Pancreas (tissue), 10 donors: ENCODE measurements at regions of chr21 and their contacts with region 1.

Region 1: DNA sequence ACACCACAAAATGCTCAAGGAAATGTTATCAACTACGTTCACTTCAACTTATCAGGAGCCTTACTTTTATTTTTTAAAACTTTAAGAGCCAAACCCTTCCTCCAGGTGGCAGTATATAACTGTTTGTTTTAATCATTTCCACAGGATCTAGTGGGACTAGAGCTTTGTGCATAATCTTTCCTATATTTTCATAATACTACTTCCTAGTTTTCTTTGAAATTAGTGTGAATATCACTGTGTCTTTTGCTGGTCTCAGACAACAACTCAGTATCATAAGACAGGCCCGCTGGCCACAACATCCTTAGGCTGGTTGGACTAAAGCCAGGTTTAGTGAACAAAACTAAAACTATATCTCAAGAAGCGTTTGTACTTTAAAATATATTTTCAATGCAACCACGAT is 145.5 kb downstream of the TIAM1 start:
- DNase-seq: no peak
- ATAC-seq: peak in 3 of 4 donors; percentile 75 to 82 (median 79)
- H3K4me3 ChIP-seq: no peak overlapping the region
- H3K27ac ChIP-seq: no peak overlapping the region
- H3K4me1 ChIP-seq: peaks cover 0 to 5% (median 0%) of the 10 kb centered on the region in 3 donors
- H3K27me3 ChIP-seq: peaks cover 0 to 10% (median 2%) of the 10 kb centered on the region in 4 donors
- CTCF ChIP-seq: peak in 3 of 4 donors; percentile 39 to 63 (median 54)

Region 2: DNA sequence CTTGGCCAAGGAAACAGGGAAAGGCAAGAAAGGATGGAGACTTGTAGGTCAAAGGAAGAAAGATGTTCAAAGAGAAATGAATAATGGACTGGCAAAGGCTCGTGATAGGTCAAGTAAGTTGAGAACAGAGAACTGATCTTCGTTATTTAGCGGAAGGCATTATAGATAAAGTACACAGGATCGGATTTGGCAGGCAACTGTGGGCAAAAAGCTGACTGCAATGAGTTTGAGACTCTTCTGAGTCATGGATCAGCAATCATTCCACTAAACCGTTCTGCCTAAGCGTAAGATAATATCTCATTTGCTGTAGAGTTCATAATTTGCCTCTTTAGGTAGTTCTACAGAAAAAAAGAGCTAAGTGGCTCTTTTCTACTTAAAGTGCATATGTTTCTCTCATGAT is 514.1 kb before region 1 on chr21:
- intact Hi-C with region 1: no loop called
- DNase-seq: no peak
- ATAC-seq: no peak
- H3K4me3 ChIP-seq: no peak overlapping the region
- H3K27ac ChIP-seq: no peak overlapping the region
- H3K4me1 ChIP-seq: no peaks in the 10 kb centered on the region
- H3K27me3 ChIP-seq: no peaks in the 10 kb centered on the region
- CTCF ChIP-seq: no peak

Region 3: DNA sequence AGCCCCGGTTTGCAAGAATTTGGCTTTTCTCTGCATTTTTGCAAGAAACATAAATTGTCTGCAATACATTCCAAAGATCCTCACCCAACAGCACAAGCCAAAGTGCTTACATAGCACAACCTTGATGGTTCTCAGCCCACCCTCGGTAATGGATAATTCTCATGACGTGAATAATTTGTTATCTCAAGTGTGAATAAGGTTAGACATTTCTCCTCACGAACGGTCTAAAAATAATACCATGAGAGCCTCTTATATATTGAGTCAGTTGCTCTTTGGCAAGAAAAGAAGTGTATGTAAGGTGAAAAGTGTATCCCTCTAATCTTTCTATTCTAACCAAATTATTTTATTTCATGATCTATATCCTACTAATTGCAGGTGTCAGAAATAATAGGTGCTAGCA is 193.6 kb before region 1 on chr21:
- intact Hi-C with region 1: no loop called
- DNase-seq: no peak
- ATAC-seq: no peak
- H3K4me3 ChIP-seq: no peak overlapping the region
- H3K27ac ChIP-seq: no peak overlapping the region
- H3K4me1 ChIP-seq: no peaks in the 10 kb centered on the region
- H3K27me3 ChIP-seq: no peaks in the 10 kb centered on the region
- CTCF ChIP-seq: no peak

Region 4: GRCh38 chr21:31580866-31581276 is 382.3 kb after region 1 on chr21:
- intact Hi-C with region 1: loop called in 2 of 3 experiments (anchors 5 to 10 kb)
- DNase-seq: peak; percentile 39 to 80 (median 52)
- ATAC-seq: peak; percentile 38 to 93 (median 91)
- H3K4me3 ChIP-seq: no peak overlapping the region
- H3K27ac ChIP-seq: no peak overlapping the region
- H3K4me1 ChIP-seq: no peaks in the 10 kb centered on the region
- H3K27me3 ChIP-seq: peaks cover 0 to 3% (median 0%) of the 10 kb centered on the region in 4 donors
- CTCF ChIP-seq: peak; percentile 44 to 80 (median 68)

Region 5: DNA sequence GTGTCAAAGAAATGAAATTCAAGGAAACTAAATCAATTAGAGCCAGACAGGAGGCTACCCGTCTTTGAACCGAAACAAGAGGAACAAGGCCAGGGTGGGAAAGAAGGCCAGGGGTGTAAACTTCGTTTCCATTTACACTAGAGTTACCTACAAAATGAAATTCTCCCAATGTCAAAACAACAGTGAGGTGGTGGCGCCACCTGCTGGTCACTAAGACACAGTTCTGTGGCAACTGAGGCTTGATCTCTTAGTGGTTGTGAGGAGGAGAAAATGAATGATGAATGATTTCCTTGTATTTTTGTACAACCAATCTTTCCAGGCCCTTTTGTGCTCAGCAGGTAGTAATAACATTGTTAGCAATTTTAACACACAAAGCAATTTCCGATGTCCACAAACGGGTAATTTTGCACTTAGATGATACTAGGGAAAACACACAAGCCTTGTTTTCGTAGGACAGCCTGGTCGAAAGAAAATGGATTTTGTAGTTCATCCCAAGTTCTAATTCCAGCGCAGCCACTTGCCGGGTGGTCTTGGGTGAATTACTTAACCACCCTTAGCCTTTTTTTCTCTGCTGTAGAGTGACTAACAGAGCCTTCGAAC is 406.1 kb after region 1 on chr21:
- intact Hi-C with region 1: loop called in 1 of 3 experiments (anchors 10 kb)
- DNase-seq: peak; percentile 25 to 88 (median 60)
- ATAC-seq: peak; percentile 53 to 90 (median 88)
- H3K4me3 ChIP-seq: no peak overlapping the region
- H3K27ac ChIP-seq: no peak overlapping the region
- H3K4me1 ChIP-seq: no peaks in the 10 kb centered on the region
- H3K27me3 ChIP-seq: no peaks in the 10 kb centered on the region
- CTCF ChIP-seq: peak; percentile 83 to 93 (median 88)